SK-N-SH (cell line): ENCODE measurements at regions of chr19 and their contacts with region 1.

Region 1: GRCh38 chr19:3075895-3076431 is 13.7 kb upstream of the TLE5 start:
- DNase-seq: peak; percentile 89
- H3K4me3 ChIP-seq: peak overlapping the region; percentile 24 to 57; a peak in 3 of 4 replicates
- H3K27ac ChIP-seq: no peak overlapping the region
- H3K4me1 ChIP-seq: peaks cover 0 to 3% of the 10 kb centered on the region in 2 experiments; a peak in 1 of 4 replicates
- H3K27me3 ChIP-seq: no peaks in the 10 kb centered on the region
- CTCF ChIP-seq: peak; percentile 93
- EP300 ChIP-seq: no peak
- RAD21 ChIP-seq: peak; percentile 77

Region 2: GRCh38 chr19:2722541-2723344 is 353.2 kb before region 1 on chr19:
- CTCF ChIA-PET with region 1: no interaction called
- POLR2A ChIA-PET with region 1: no interaction called
- DNase-seq: peak; percentile 30
- H3K4me3 ChIP-seq: no peak overlapping the region
- H3K27ac ChIP-seq: peak overlapping the region in 1 of 2 experiments; percentile 23; a peak in 1 of 4 replicates
- H3K4me1 ChIP-seq: peaks cover 15 to 21% of the 10 kb centered on the region in 2 experiments; a peak in 3 of 4 replicates
- H3K27me3 ChIP-seq: no peaks in the 10 kb centered on the region
- CTCF ChIP-seq: no peak
- EP300 ChIP-seq: no peak
- RAD21 ChIP-seq: no peak

Region 3: GRCh38 chr19:2962045-2962561 is 113.9 kb before region 1 on chr19:
- CTCF ChIA-PET with region 1: interaction called, 43 read pairs
- POLR2A ChIA-PET with region 1: no interaction called
- DNase-seq: peak; percentile 77
- H3K4me3 ChIP-seq: peak overlapping the region in 1 of 2 experiments; percentile 37; a peak in 1 of 4 replicates
- H3K27ac ChIP-seq: no peak overlapping the region
- H3K4me1 ChIP-seq: no peaks in the 10 kb centered on the region
- H3K27me3 ChIP-seq: 0 out of 2 replicates have a peak, but pooled peaks cover 3% of the 10 kb centered on the region
- CTCF ChIP-seq: peak; percentile 83
- EP300 ChIP-seq: no peak; a peak in 1 of 4 replicates
- RAD21 ChIP-seq: peak; percentile 94

Region 4: DNA sequence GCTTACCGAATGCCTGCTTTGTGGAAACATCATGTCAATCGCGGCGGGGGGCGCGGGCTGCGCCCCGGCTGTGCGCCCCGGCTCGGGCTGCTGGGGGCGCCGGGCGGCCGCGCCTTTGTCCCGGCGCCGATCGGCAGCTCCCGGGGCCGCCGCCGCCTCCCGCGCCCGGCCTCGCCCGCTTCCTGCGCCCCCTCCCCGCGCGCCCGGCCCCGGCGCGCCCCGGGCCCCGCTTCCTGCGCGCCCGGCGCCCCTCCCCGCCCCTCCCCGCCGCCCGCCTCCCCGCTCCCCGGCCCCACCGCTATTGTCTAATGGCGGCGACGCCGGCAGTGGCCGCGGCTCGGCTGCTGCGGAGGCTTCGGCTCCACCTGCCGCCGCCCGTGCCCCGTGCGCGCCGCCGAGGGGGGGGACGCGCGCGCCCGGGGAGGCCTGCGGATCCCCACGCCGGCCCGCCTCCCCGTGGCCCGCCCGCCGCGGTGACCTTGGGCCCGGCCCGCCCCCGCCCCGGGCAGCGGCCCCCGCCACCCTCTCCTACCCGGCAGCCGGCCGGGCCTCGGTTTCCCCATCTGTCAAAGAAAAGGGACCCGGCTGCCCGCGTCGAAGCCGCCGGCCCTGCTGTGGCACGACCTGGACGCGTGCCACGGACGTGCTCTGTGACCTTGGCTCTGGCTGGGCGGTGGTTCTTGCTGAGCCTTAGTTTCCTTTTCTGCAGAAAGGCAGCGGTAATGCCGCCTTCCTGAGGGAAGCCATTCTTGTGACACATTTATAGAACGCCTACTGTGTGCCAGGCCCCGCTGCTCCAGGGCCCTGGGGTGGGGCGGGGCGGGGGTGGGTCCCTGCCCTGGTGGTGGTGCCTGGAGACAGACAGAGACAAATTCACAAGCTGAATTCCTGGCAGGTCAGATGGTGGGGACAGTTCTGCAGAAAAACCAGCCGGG is 13.5 kb before region 1 on chr19 and contains the start of gene TLE5:
- CTCF ChIA-PET with region 1: interaction called, 16 read pairs
- POLR2A ChIA-PET with region 1: no interaction called
- DNase-seq: peak; percentile 92
- H3K4me3 ChIP-seq: peak within 1 kb of the TSS; percentile 71 to 74
- H3K27ac ChIP-seq: peak within 1 kb of the TSS; percentile 56 to 83; a peak in 3 of 4 replicates
- H3K4me1 ChIP-seq: peaks cover 0 to 3% of the 10 kb centered on the region in 2 experiments; a peak in 1 of 4 replicates
- H3K27me3 ChIP-seq: no peaks in the 10 kb centered on the region
- CTCF ChIP-seq: no peak
- EP300 ChIP-seq: no peak
- RAD21 ChIP-seq: no peak
- polyA plus RNA-seq, gene TLE5: 479 and 519 TPM in 2 replicates

Region 5: GRCh38 chr19:3094601-3095437 is 18.9 kb after region 1 on chr19:
- CTCF ChIA-PET with region 1: interaction called, 23 read pairs
- POLR2A ChIA-PET with region 1: no interaction called
- DNase-seq: no peak
- H3K4me3 ChIP-seq: peak overlapping the region; percentile 80 to 88
- H3K27ac ChIP-seq: no peak overlapping the region; a peak in 2 of 4 replicates
- H3K4me1 ChIP-seq: peaks cover 0 to 22% of the 10 kb centered on the region in 2 experiments; a peak in 1 of 4 replicates
- H3K27me3 ChIP-seq: no peaks in the 10 kb centered on the region
- CTCF ChIP-seq: no peak
- EP300 ChIP-seq: no peak
- RAD21 ChIP-seq: no peak

Region 6: DNA sequence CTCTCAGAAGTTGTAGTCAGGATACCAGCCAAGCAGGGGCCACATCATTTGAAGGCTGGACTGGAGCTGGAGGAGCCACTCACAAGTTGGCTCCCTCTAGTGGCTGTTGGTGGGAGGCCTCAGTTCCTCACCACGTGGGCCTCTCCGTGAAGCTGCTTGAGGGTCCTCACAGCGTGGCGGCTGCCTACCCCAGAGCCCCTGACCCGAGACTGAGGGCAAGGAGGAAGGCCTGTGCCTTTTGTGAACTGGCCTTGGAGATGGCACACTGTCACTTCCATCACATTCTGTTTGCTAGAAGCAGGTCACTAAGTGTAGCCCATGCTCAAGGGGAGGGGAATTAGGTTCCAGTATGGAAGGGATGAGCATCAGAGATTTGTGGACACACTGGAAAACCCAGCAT is 32.8 kb after region 1 on chr19:
- CTCF ChIA-PET with region 1: interaction called, 124 read pairs
- POLR2A ChIA-PET with region 1: no interaction called
- DNase-seq: peak; percentile 84
- H3K4me3 ChIP-seq: no peak overlapping the region
- H3K27ac ChIP-seq: no peak overlapping the region
- H3K4me1 ChIP-seq: no peaks in the 10 kb centered on the region
- H3K27me3 ChIP-seq: no peaks in the 10 kb centered on the region
- CTCF ChIP-seq: peak; percentile 85
- EP300 ChIP-seq: no peak
- RAD21 ChIP-seq: peak; percentile 63

Region 7: GRCh38 chr19:3176603-3177501 is 100.9 kb after region 1 on chr19:
- CTCF ChIA-PET with region 1: no interaction called
- POLR2A ChIA-PET with region 1: no interaction called
- DNase-seq: no peak
- H3K4me3 ChIP-seq: no peak overlapping the region
- H3K27ac ChIP-seq: no peak overlapping the region
- H3K4me1 ChIP-seq: no peaks in the 10 kb centered on the region; a peak in 1 of 4 replicates
- H3K27me3 ChIP-seq: no peaks in the 10 kb centered on the region
- CTCF ChIP-seq: no peak
- EP300 ChIP-seq: no peak
- RAD21 ChIP-seq: no peak